Ovary (tissue), 10 donors: ENCODE measurements at regions of chr2 and their contacts with region 1.

Region 1: DNA sequence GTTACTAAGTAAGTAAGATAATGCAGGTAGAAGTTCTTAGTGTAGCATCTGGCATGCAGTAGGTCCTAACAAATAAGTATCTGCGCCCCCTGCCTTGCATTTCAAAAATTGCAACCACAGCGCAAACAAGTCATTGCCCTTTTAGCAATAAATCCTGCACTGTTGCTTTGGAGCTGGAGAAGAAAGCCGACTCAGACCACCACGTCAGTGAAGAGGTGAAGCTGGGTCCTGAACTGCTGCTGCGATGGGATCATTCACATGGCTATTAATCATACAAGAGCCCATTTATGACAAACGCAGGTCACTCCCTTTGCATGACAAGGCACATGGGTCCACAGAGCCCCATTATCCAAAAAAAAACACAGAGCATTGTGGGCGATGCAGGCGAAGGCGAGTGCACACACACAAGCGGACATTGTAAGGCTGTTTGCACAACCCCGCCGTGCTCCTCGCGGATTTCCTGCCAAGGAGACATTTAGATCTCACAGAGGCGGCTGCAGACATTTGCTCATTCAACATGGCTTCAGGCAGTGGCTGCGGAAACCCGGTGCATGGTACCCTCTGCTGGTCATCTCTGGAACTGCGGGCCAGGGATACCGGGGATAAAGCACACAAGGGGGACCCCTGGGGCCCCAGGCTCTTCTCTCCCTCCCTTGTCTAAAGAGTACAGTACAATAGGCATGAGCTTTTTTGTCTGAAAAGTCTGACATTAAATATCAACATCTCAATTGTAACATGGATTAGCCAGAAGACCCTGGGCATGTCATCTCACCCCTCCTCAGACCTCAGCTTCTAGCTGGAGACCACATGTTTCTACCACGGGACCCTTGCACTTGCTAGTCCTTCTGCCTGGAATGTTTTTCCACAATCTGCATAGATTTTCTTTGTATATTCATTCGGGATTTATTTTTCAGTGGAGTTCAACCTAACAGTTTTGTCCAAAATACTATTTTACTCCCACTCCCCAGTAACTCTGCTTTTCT is 56.7 kb downstream of the CYRIA start:
- DNase-seq: peak; percentile 73 to 91 (median 86)
- H3K4me3 ChIP-seq: peak overlapping the region; percentile 9
- H3K27ac ChIP-seq: no peak overlapping the region
- H3K4me1 ChIP-seq: peaks cover 5% of the 10 kb centered on the region
- H3K27me3 ChIP-seq: no peaks in the 10 kb centered on the region
- CTCF ChIP-seq: peak; percentile 74 to 87 (median 82)
- EP300 ChIP-seq: no peak
- POLR2A ChIP-seq: no peak

Region 2: DNA sequence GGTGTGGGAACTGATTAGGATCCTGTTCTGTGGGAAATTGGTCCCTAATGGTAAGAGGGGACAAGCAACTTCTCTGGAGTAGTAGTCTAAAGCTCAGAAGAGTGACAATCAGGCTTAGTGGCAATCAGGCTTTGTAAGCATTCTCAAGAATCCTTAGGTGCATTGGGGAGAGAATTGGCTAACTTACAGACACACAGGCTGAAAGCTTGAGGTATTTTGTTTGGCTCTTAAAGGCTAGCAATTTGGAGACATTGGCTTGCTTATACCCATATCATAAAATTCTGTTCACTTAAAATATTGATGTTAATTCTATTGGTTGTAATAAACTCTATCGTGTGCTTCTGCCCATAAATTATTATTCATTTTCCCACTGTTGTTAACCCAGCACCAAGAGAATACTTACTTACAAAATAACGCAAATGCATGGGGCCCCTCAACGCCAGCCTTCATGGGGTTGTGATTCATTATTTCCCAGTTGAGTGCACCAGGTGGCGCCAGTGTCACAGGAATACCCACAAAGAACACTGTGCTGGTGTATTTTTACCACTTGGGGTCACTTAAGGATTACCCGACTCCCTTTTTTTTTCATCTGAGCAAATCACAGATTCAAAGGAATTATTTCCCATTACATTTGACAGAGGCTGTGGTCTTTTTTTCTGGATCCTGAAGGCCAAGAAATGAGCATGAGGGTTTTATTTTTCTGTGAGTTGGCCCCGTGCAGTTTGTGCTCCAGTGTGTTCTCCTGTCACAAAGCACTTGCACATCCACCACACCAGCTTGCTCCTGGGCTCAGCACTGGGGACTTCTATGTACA is 971.8 kb before region 1 on chr2:
- intact Hi-C with region 1: loop called in 2 of 4 experiments (anchors 5 kb)
- DNase-seq: peak; percentile 67 to 86 (median 83)
- H3K4me3 ChIP-seq: no peak overlapping the region
- H3K27ac ChIP-seq: no peak overlapping the region
- H3K4me1 ChIP-seq: peaks cover 15% of the 10 kb centered on the region
- H3K27me3 ChIP-seq: no peaks in the 10 kb centered on the region
- CTCF ChIP-seq: peak; percentile 63 to 96 (median 96)
- EP300 ChIP-seq: no peak
- POLR2A ChIP-seq: no peak

Region 3: GRCh38 chr2:15939854-15940660 is 668.9 kb before region 1 on chr2 and contains the start of gene MYCN:
- intact Hi-C with region 1: loop called in 1 of 4 experiments (anchors 5 kb)
- DNase-seq: peak; percentile 52 to 72 (median 56)
- H3K4me3 ChIP-seq: peak within 1 kb of the TSS; percentile 44
- H3K27ac ChIP-seq: no peak within 1 kb of the TSS
- H3K4me1 ChIP-seq: no peaks in the 10 kb centered on the region
- H3K27me3 ChIP-seq: no peaks in the 10 kb centered on the region
- CTCF ChIP-seq: peak in 1 of 3 donors; percentile 27
- EP300 ChIP-seq: no peak
- POLR2A ChIP-seq: no peak
- total RNA-seq, gene MYCN: 1.2 to 7.0 (median 2.1) TPM

Region 4: GRCh38 chr2:15984368-15985255 is 624.3 kb before region 1 on chr2:
- intact Hi-C with region 1: no loop called
- DNase-seq: no peak
- H3K4me3 ChIP-seq: no peak overlapping the region
- H3K27ac ChIP-seq: no peak overlapping the region
- H3K4me1 ChIP-seq: no peaks in the 10 kb centered on the region
- H3K27me3 ChIP-seq: no peaks in the 10 kb centered on the region
- CTCF ChIP-seq: no peak
- EP300 ChIP-seq: no peak
- POLR2A ChIP-seq: no peak

Region 5: DNA sequence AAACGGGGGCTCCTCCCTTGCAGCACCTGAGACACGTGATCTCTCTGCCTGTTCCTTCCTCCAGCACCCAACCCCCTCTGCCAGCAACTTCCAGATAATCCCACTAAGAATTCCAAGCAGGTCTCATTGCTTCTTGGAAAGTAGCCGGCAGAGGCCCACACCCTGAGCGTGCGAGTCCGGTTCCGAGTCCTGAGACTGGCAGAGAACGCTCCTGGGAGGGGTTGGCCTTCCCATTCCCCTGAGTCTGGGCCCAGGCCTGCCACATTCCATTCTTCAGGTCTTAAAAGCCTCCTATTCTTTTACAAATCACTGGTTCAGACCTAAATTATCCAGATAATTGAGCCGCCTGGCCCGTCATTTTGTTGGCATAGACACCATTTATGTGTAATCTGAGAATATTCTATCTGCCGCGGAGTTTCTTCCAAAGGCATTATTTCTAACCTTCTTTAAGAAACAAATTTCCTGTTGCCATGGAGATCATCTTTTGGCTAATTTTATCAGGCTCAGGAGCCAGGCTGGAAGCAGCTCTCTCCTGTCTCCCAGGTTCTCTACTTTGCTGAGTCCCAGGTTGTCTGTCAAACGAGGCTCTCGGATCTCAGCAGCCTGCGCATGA is 503.2 kb before region 1 on chr2:
- intact Hi-C with region 1: loop called in 1 of 4 experiments (anchors 5 kb)
- DNase-seq: no peak
- H3K4me3 ChIP-seq: no peak overlapping the region
- H3K27ac ChIP-seq: no peak overlapping the region
- H3K4me1 ChIP-seq: no peaks in the 10 kb centered on the region
- H3K27me3 ChIP-seq: no peaks in the 10 kb centered on the region
- CTCF ChIP-seq: no peak
- EP300 ChIP-seq: no peak
- POLR2A ChIP-seq: no peak

Region 6: DNA sequence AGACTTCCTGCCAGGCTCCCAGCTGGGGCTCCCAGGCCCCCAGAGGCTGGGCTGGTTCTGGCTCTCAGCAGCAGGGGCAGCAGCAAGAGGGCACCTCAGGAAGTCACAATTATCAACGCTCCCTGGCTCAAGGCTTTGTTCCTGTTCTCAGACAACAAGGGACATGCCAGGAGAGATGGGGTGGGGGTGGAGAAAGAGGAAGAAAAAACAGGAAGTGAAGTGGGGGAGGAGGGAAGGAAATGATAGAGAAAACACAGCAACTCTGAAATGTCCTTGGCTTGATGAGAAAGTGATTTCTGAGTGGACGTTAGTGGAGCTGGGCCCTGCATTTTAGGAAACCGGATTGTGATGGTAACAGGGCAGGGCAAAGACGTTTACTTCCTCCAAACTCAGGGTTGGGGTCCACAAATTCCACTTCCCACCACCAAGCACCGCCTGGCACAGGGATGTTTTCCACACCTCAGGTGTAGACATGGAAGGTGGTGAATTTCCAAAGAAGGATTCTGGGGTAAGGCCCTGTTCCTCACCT is 16.3 kb after region 1 on chr2:
- intact Hi-C with region 1: no loop called
- DNase-seq: peak in 3 of 5 donors; percentile 42 to 45 (median 42)
- H3K4me3 ChIP-seq: no peak overlapping the region
- H3K27ac ChIP-seq: peak overlapping the region; percentile 43 to 75
- H3K4me1 ChIP-seq: peaks cover 19% of the 10 kb centered on the region
- H3K27me3 ChIP-seq: no peaks in the 10 kb centered on the region
- CTCF ChIP-seq: no peak
- EP300 ChIP-seq: no peak
- POLR2A ChIP-seq: no peak

Region 7: DNA sequence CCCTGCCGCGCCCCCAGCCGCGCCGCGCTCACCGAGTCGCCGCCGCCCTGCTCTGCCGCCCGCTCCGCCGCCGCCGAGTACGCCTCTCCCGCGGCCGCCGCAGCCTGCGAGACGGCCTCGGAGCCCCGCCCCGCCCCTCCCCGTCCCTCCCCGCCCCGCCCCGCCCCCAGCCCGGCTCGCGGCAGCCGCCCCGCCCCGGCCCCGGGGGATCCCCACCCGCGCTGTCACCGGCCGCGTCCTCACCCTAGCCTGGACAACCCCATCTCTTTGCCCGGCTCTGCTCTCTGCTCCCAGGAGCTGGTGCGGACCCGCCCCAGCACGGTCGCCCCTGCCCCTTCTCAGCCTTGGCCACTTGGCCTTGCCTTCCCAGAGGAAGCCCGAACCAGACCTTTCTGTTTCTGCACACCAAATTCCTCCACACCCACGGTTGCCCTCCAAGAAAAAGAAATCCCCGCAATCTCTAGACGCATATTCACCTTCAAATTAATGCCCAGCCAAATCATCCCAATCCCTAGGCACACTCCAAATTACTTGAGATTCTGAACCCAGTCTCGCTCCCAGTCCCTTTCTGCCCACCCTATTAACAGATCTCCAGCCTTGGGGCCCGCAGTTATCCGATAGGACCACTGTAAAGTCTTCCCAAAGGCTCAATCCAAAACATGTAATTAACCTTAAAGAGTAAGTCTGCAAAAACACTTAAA is 56.9 kb after region 1 on chr2 and contains the start of gene CYRIA:
- intact Hi-C with region 1: loop called in 1 of 4 experiments (anchors 10 kb)
- DNase-seq: peak; percentile 56 to 77 (median 70)
- H3K4me3 ChIP-seq: peak within 1 kb of the TSS; percentile 89
- H3K27ac ChIP-seq: no peak within 1 kb of the TSS
- H3K4me1 ChIP-seq: peaks cover 8% of the 10 kb centered on the region
- H3K27me3 ChIP-seq: no peaks in the 10 kb centered on the region
- CTCF ChIP-seq: no peak
- EP300 ChIP-seq: no peak
- POLR2A ChIP-seq: no peak
- total RNA-seq, gene CYRIA: 9.7 to 21.3 (median 13.2) TPM

Region 8: GRCh38 chr2:16750175-16750924 is 141.4 kb after region 1 on chr2:
- intact Hi-C with region 1: loop called in 3 of 4 experiments (anchors 5 kb)
- DNase-seq: no peak
- H3K4me3 ChIP-seq: no peak overlapping the region
- H3K27ac ChIP-seq: no peak overlapping the region
- H3K4me1 ChIP-seq: no peaks in the 10 kb centered on the region
- H3K27me3 ChIP-seq: no peaks in the 10 kb centered on the region
- CTCF ChIP-seq: no peak
- EP300 ChIP-seq: no peak
- POLR2A ChIP-seq: no peak

Region 9: DNA sequence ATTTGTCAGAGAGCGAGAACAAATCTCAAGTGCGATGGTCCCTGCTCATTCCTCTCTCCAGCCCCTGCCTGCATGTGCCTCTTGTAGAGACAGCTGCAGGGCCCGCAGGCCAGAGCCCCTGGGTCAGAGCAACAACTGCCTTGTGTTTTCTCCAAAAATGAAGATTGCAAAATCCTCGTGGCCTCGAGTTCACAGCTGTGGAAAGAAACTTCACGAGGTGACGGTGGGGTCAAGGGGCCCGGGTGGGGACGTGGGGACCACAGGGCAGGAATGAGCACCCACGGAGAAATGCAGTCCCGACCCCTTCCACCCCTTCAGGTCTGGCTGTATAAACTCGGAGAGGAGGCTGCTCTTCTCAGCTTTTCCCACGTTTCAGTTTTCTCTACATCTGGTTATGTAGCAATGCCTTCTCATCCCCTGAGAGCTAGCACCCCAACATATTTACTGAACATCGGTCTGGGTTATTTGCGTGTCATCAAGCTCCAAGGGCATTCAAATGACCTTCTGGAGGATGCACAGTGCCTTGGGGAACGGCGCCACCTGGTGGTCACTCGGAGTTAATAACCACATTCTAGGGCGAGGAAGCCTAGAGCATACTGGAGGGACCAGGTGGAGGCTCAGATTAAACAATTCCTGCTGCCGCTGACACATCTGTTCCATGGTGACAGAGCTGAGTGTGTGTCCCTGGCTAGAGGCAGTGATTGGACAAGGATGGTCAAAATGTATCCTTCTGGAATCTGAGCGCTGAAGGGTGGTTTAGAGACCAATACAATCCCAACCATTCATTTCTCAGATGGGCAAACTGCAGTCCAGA is 148.1 kb after region 1 on chr2:
- intact Hi-C with region 1: loop called in 3 of 4 experiments (anchors 5 kb)
- DNase-seq: peak; percentile 81 to 91 (median 86)
- H3K4me3 ChIP-seq: no peak overlapping the region
- H3K27ac ChIP-seq: peak overlapping the region in 1 of 2 donors; percentile 76
- H3K4me1 ChIP-seq: peaks cover 14% of the 10 kb centered on the region
- H3K27me3 ChIP-seq: no peaks in the 10 kb centered on the region
- CTCF ChIP-seq: peak; percentile 92 to 93 (median 93)
- EP300 ChIP-seq: no peak
- POLR2A ChIP-seq: no peak

Region 10: DNA sequence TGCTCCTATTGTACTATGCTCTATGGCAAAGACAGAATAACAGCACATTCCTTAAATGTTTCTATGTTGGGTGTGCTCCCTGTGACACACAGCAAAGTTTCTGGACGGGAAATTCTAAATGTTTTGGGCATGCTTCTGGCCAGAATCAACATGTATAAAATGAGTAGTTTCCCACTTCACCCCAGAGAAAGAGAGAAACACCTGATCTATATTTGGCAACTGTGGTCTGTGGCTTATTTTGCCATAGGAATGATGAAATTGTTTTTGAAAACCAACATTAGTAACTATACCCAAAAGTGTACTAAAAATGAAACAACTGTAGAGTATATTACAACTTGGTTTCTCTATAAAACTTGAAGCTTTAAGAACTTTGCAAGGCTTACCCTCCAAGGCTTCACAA is 820.2 kb after region 1 on chr2:
- intact Hi-C with region 1: no loop called
- DNase-seq: no peak
- H3K4me3 ChIP-seq: no peak overlapping the region
- H3K27ac ChIP-seq: no peak overlapping the region
- H3K4me1 ChIP-seq: no peaks in the 10 kb centered on the region
- H3K27me3 ChIP-seq: no peaks in the 10 kb centered on the region
- CTCF ChIP-seq: no peak
- EP300 ChIP-seq: no peak
- POLR2A ChIP-seq: no peak